HEK293T (cell line): ENCODE measurements at regions of chr10 and their contacts with region 1.

Region 1: DNA sequence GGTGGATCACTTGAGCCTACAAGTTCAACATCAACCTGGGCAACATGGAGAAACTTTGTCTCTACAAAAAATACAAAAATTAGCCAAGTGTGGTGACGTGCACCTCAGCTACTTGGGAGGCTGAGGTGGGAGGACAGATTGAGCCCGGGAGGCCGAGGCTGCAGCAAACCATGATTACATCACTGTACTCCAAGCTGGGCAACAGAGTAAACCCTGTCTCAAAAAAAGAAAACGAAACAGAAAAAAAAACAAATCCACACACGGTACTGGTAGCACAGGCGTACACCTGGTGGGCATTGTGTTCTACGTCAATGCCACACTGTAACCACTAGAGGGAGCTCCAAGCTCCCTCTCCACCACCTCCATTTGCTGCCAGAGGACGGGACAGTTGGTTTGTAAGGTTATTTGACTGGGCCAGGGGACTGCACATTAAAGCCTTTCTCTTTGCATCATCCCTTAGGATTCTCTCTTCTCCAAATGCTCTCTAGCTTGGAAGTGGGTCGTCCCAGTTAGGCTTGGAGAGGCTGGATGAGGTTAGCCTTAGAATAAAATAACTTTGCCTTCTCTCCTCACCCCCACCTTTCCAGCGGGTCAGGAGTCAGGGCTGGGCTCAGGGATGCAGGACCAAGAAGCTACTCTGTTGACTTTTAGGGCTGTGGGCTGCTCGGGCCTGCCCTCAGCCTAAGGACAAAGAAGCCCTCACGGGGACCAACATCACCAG is 130.8 kb downstream of the SORBS1 start:
- DNase-seq: peak; percentile 88

Region 2: GRCh38 chr10:95445837-95446486 is 15.6 kb after region 1 on chr10:
- CTCF ChIA-PET with region 1: interaction called, 13 read pairs
- POLR2A ChIA-PET with region 1: no interaction called
- DNase-seq: peak; percentile 90

Region 3: GRCh38 chr10:95462740-95463667 is 32.6 kb after region 1 on chr10:
- CTCF ChIA-PET with region 1: no interaction called
- POLR2A ChIA-PET with region 1: no interaction called
- DNase-seq: no peak

Region 4: DNA sequence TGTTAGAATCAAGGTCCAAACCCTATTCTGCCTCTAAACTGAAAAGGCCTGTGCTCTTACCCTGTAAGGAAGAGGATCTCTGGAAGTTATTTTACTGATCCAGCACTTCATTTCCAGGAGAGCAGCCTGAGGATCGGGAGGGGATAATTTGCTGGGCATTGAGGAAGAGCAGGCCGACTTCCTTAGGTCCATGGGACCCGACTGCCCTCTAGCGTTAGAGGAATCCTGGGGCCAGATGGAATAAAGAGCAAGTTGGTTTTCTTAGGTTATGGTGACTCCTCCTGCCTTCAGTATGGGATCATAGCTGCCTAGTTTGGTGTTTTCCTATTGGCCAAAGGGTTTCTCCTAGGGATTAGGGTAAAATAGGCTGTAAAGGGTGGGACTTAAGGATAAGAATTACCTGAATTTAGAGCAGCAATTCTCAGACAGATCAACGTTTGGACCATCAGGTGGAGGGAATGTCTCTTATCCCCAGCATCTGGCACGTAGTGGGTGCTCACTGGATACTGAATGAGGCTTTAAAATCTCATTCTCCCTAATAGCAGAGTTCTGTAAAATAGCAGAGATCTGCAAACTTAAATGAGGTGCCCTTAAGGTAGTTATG is 170.8 kb after region 1 on chr10:
- CTCF ChIA-PET with region 1: interaction called, 16 read pairs
- POLR2A ChIA-PET with region 1: no interaction called
- DNase-seq: peak; percentile 90

Region 5: DNA sequence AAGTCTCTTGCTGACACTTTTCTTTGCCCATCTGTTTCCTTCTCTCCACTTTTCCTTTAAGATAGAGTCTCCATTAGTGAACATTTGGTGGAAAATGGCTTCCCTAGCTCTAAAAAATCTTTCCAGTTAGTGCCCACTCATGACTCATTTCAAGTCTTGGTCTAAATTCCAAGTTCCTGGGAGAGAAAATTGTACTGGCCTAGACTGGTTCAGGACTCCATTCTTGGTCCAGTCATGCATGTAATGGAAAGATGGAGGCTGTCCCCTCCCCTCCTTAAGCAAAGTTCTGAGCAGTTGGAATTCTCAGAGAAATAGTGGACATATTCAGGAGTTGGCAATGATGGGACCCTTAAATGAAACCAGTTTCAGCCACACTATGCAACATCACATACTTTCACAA is 229.9 kb after region 1 on chr10:
- CTCF ChIA-PET with region 1: no interaction called
- POLR2A ChIA-PET with region 1: no interaction called
- DNase-seq: no peak